Activated naive CD4-positive, alpha-beta T cell treated with anti-CD3 and anti-CD28 coated beads for 36 hours (primary cell): ENCODE measurements at regions of chr12 and their contacts with region 1.

Region 1: GRCh38 chr12:85971800-85972199 is 97.7 kb downstream of the NTS start:
- DNase-seq: no peak
- H3K4me3 Mint-ChIP-seq: no peak overlapping the region
- H3K27ac Mint-ChIP-seq: no peak overlapping the region
- H3K4me1 Mint-ChIP-seq: no peaks in the 10 kb centered on the region
- H3K27me3 Mint-ChIP-seq: no peaks in the 10 kb centered on the region

Region 2: GRCh38 chr12:85877459-85877858 is 94.3 kb before region 1 on chr12:
- CTCF ChIA-PET with region 1: no interaction called
- intact Hi-C with region 1: no loop called
- DNase-seq: no peak
- H3K4me3 Mint-ChIP-seq: no peak overlapping the region
- H3K27ac Mint-ChIP-seq: no peak overlapping the region
- H3K4me1 Mint-ChIP-seq: no peaks in the 10 kb centered on the region
- H3K27me3 Mint-ChIP-seq: peaks cover 2% of the 10 kb centered on the region

Region 3: GRCh38 chr12:85985996-85986395 is 14.2 kb after region 1 on chr12:
- CTCF ChIA-PET with region 1: no interaction called
- intact Hi-C with region 1: no loop called
- DNase-seq: no peak
- H3K4me3 Mint-ChIP-seq: no peak overlapping the region
- H3K27ac Mint-ChIP-seq: no peak overlapping the region
- H3K4me1 Mint-ChIP-seq: no peaks in the 10 kb centered on the region
- H3K27me3 Mint-ChIP-seq: no peaks in the 10 kb centered on the region

Region 4: DNA sequence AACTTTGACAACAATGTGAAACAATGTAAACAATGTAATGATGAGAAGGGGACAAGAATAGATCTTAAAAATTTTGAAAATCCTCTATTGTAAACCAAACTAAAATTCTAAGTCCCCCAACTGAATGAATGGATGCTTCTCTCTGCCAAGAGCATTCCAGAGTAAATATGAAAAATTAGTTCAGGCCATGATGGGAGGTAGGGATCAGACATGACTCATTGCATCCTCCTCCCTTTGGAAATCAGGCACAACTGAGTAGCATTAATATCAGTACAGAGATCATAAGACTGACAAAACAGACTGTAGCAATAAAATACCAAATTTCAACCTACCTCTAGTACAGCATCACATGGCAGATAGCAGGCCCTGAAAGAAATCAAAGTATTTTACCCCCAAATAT is 1497.5 kb after region 1 on chr12:
- CTCF ChIA-PET with region 1: no interaction called
- intact Hi-C with region 1: loop called (anchors 10 kb)
- DNase-seq: no peak
- H3K4me3 Mint-ChIP-seq: no peak overlapping the region
- H3K27ac Mint-ChIP-seq: no peak overlapping the region
- H3K4me1 Mint-ChIP-seq: no peaks in the 10 kb centered on the region
- H3K27me3 Mint-ChIP-seq: no peaks in the 10 kb centered on the region